AG04450 (cell line): ENCODE measurements at regions of chr3 and their contacts with region 1.

Region 1: DNA sequence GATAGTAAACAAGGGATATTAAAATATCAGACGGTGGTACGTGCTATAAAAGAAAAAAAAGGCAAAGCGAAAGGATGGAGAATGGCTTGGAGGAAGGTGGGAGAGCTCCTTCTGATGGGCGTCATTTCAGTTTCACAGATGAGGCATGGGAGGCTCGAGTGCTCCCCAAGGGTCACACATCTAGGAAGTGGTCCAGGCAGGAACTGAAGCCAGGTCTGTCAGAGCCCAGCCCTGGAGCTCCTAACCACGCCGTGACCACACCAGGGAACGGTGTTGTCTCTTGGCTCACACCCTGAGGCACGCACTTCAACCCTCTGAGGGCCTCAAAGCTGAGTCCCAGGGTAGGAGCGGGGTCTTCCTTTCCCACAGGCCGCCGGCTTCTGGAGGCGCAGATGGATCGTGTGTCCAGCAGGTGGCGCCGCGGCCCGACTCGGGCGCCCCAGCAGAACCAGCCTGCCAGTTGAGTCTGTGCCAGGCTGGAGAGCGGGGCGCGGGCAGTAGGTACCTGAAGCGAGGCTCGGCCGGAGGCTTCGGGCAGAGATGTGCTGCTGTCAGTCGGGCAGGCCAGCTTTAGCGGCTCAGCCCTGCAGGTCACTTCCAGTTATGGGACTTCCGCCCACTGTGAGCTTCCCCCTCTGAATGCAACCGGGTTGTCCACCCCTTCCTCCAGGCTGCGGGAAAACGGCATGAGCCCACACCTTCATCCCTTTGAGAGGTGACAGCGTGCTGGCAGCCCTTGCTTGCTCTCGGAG is 68.1 kb downstream of the SLC6A1 start:
- DNase-seq: peak; percentile 23
- H3K4me3 ChIP-seq: peak overlapping the region; percentile 20; the same call in 1 of the 2 replicates
- H3K27ac ChIP-seq: no peak overlapping the region
- H3K27me3 ChIP-seq: peaks cover 8% of the 10 kb centered on the region
- CTCF ChIP-seq: peak; percentile 85

Region 2: DNA sequence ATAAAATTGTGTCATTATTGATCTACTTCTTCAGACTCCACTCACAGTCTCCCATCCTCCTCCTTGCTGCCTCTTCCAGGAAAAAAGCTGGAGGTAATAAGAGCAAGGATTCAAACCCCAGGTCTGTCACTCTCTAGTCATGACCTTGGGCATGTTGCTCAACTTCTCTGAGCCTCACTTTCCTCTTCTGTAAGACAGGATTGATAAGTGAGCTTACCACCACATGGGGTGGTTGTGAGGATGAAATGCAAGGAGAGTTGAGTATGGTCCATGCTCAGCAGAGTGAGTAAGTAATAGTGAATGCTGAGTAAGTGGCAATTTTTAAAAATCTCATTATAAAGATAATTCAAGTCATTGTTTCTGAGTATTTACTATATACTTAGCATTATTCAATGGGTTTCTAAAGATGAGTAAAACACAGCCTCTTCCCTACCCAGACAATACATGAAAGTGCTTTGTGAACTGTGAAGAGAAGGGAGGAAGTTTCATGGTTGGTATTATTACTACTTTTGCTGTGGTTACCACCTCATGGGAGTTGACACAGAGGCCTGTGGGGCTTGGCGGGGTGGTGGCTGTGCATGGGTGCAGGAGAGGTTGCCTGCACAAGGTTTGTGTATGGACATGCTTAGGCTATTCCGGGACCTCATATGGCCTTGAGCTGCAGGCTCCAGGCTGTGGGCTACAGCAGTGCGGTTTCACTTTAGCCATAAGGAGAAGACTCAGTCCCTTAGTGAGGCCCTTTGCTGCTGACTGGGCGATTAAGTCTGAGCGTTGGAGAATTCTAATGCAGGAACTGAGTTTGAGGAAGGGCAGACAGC is 214.6 kb before region 1 on chr3:
- CTCF ChIA-PET with region 1: no interaction called
- POLR2A ChIA-PET with region 1: no interaction called
- DNase-seq: no peak
- H3K4me3 ChIP-seq: no peak overlapping the region
- H3K27ac ChIP-seq: no peak overlapping the region
- H3K27me3 ChIP-seq: peaks cover 11% of the 10 kb centered on the region
- CTCF ChIP-seq: no peak

Region 3: DNA sequence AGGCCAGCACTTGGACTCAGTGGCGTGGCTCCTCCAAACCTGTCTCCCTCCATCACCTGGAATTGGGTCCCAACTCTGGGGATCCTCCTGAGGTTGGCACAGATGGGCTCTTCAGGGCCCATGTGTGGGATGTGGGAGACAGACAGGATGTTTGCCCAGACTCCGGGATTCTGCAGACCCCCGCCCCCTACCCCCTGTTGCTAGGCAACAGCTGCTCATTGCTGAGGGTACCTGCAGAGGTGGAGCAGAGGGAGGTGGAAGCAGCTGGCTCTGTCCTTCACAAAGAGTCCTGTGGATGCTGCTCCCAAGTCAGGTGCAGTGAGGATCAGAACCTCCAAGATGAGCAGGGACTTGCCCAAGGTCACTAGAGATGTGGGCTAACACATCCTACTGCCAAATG is 108.2 kb before region 1 on chr3:
- CTCF ChIA-PET with region 1: interaction called, 51 read pairs
- POLR2A ChIA-PET with region 1: no interaction called
- DNase-seq: no peak
- H3K4me3 ChIP-seq: no peak overlapping the region
- H3K27ac ChIP-seq: no peak overlapping the region
- H3K27me3 ChIP-seq: peaks cover 24% of the 10 kb centered on the region
- CTCF ChIP-seq: no peak

Region 4: GRCh38 chr3:11034309-11034985 is 26.2 kb before region 1 on chr3:
- CTCF ChIA-PET with region 1: no interaction called
- POLR2A ChIA-PET with region 1: no interaction called
- DNase-seq: no peak
- H3K4me3 ChIP-seq: no peak overlapping the region
- H3K27ac ChIP-seq: no peak overlapping the region
- H3K27me3 ChIP-seq: peaks cover 11% of the 10 kb centered on the region
- CTCF ChIP-seq: no peak

Region 5: GRCh38 chr3:11077466-11077865 is 16.8 kb after region 1 on chr3:
- CTCF ChIA-PET with region 1: interaction called, 49 read pairs
- POLR2A ChIA-PET with region 1: interaction called, 10 read pairs
- DNase-seq: peak; percentile 42
- H3K4me3 ChIP-seq: no peak overlapping the region
- H3K27ac ChIP-seq: no peak overlapping the region
- H3K27me3 ChIP-seq: no peaks in the 10 kb centered on the region
- CTCF ChIP-seq: no peak

Region 6: DNA sequence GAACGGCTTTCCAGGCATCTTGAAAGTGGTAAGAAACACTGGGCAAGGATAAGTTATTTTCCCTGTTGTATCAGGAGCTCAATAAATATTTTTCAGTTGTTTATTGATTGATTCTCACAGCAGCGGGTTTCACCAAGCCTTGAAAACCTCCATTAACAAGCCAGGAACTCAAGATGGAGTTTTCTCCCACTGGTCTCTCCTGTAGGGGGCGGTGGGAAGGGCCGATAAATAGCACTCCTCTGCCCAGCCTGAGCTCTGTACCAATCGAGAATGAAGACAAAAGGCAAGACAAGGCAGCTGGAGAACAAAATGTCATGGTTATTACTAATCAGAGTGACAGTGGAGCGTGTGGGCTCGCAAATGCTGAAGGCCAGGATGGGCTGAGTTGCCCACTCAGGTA is 101.0 kb after region 1 on chr3:
- CTCF ChIA-PET with region 1: interaction called, 41 read pairs
- POLR2A ChIA-PET with region 1: no interaction called
- DNase-seq: no peak
- H3K4me3 ChIP-seq: no peak overlapping the region
- H3K27ac ChIP-seq: no peak overlapping the region
- H3K27me3 ChIP-seq: no peaks in the 10 kb centered on the region
- CTCF ChIP-seq: no peak

Region 7: GRCh38 chr3:11211531-11212298 is 151.0 kb after region 1 on chr3:
- CTCF ChIA-PET with region 1: interaction called, 16 read pairs
- POLR2A ChIA-PET with region 1: no interaction called
- DNase-seq: no peak
- H3K4me3 ChIP-seq: no peak overlapping the region
- H3K27ac ChIP-seq: no peak overlapping the region
- H3K27me3 ChIP-seq: no peaks in the 10 kb centered on the region
- CTCF ChIP-seq: peak; percentile 35

Region 8: DNA sequence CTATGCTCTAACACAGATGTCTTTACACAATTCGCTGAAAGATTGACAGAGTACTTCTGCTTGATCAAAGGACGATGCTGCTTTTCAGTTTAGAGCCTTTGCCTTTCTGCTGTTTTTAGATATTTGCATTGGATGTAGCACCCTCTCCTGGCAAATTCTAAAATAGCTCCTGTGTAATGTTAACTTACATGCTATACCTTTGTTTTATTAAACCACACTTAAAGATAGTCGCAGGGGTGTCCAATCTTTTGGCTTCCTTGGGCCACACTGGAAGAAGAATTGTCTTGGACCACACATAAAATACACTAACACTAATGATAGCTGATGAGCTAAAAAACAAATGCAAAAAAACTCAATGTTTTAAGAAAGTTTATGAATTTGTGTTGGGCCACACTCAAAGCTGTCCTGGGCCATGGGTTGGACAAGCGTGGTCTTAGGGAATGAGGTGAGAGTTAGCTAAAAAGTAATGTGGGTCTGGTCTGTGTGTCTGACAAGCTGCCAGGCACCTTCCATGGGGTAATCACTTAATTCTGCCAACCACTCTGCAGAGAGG is 274.5 kb after region 1 on chr3:
- CTCF ChIA-PET with region 1: interaction called, 202 read pairs
- POLR2A ChIA-PET with region 1: no interaction called
- DNase-seq: peak; percentile 45
- H3K4me3 ChIP-seq: no peak overlapping the region
- H3K27ac ChIP-seq: no peak overlapping the region
- H3K27me3 ChIP-seq: no peaks in the 10 kb centered on the region
- CTCF ChIP-seq: peak; percentile 71